Heart right ventricle (tissue), 16 donors: ENCODE measurements at regions of chr5 and their contacts with region 1.

Region 1: DNA sequence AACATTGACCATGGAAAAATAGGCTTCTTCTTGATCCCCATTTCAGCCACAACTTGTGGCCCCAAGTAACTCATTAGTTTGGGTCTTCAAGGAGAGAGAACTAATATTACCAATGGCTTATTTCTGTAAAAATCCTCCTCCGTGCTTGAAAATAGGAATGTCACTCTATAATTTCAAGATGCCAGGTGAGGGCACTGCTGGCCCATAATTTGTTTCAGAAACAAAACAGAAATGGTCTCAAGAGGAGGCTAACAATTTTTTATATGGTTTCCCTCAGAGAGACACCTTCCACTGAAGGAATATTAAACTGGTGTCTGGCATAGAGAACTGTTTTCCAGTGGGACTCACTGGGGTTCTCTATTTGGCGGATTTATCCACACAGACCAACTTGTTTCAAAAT is 437.0 kb upstream of the TRPC7 start:
- DNase-seq: no peak
- ATAC-seq: peak in 2 of 8 donors; percentile 35 to 58
- H3K4me3 ChIP-seq: no peak overlapping the region
- H3K27ac ChIP-seq: no peak overlapping the region
- H3K4me1 ChIP-seq: no peaks in the 10 kb centered on the region
- H3K27me3 ChIP-seq: no peaks in the 10 kb centered on the region
- CTCF ChIP-seq: peak in 8 of 9 donors; percentile 15 to 64 (median 48)

Region 2: DNA sequence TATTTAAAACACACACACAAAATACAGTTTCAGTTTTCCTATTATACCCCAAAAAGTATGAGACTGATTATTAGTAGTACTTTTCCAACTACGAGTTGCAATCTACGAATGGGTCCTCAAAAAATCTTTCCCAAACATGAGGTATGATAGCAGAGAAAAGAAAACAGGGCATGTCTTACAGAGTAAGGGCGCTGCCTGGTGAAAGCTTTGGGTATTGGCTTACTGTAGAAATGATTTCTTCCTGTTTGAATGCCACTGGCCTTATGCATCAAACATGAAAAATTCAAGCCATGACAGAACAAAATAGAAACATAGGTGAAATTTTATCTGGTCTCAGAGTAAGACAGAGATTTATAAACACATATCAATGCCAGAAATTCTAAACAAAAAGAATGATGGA is 248.8 kb after region 1 on chr5:
- intact Hi-C with region 1: loop called (anchors 2 to 10 kb)
- DNase-seq: no peak
- ATAC-seq: peak in 1 of 8 donors; percentile 55
- H3K4me3 ChIP-seq: no peak overlapping the region
- H3K27ac ChIP-seq: no peak overlapping the region
- H3K4me1 ChIP-seq: peaks cover 0 to 6% (median 0%) of the 10 kb centered on the region in 9 donors
- H3K27me3 ChIP-seq: no peaks in the 10 kb centered on the region
- CTCF ChIP-seq: peak in 7 of 9 donors; percentile 23 to 53 (median 40)

Region 3: DNA sequence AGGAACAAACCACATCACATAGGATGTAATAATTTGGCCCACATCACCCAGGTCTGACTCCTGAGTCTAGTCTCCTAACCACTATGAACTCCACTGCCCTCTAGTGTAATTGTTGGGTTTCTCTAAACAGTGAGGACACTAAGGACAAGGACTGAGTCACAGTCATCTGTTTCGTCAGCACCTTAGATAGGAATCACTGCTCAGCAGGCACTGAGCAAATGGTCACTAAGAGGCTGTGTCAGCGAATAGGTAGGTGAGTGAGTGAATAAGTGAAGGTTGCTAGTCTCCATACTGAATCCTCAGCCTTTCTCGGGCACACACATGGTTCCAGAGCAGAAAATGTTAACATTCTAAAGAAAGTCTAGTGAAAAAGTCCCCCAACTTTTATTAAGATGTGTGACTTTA is 418.1 kb after region 1 on chr5:
- intact Hi-C with region 1: loop called in 5 of 10 experiments (anchors 2 to 10 kb)
- DNase-seq: no peak
- ATAC-seq: peak in 6 of 8 donors; percentile 46 to 90 (median 66)
- H3K4me3 ChIP-seq: no peak overlapping the region
- H3K27ac ChIP-seq: no peak overlapping the region
- H3K4me1 ChIP-seq: peaks cover 0 to 16% (median 0%) of the 10 kb centered on the region in 9 donors
- H3K27me3 ChIP-seq: no peaks in the 10 kb centered on the region
- CTCF ChIP-seq: peak in 8 of 9 donors; percentile 12 to 64 (median 52)

Region 4: DNA sequence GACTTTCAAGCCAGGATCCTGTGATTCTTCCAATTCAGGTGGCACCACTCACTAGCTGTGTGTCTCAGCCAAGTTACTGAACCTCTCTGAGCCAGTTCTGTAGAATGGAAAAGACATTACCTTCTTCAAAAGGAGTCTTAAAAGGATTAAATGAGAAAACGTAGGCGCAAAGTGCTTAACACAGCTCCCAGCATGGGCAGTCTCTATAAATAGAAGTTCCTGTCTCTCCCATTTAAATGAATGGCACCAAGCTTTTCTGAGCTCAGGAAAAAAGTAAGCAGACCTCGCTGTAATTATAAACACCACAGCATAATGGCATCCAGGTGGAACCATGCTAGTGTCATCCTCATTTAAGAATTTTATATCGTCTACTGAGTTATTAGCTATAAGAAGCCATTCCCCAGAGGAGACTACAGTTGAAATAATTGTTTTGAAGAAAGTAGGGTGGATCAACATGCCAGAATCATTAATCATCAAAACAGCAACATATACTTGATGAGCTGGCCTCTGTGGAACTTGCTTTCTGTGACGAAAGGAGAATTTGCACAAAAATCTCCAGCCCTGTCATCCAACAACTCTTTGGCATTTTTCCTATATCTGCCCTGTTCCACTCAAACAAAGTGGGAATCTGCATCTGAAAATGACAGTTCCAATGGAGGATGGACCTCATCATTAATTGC is 507.8 kb after region 1 on chr5:
- intact Hi-C with region 1: loop called in 1 of 10 experiments (anchors 10 kb)
- DNase-seq: no peak
- ATAC-seq: peak in 2 of 8 donors; percentile 9 to 36
- H3K4me3 ChIP-seq: no peak overlapping the region
- H3K27ac ChIP-seq: peak overlapping the region in 1 of 10 donors; percentile 10
- H3K4me1 ChIP-seq: peaks cover 0 to 30% (median 10%) of the 10 kb centered on the region in 9 donors
- H3K27me3 ChIP-seq: no peaks in the 10 kb centered on the region
- CTCF ChIP-seq: no peak

Region 5: DNA sequence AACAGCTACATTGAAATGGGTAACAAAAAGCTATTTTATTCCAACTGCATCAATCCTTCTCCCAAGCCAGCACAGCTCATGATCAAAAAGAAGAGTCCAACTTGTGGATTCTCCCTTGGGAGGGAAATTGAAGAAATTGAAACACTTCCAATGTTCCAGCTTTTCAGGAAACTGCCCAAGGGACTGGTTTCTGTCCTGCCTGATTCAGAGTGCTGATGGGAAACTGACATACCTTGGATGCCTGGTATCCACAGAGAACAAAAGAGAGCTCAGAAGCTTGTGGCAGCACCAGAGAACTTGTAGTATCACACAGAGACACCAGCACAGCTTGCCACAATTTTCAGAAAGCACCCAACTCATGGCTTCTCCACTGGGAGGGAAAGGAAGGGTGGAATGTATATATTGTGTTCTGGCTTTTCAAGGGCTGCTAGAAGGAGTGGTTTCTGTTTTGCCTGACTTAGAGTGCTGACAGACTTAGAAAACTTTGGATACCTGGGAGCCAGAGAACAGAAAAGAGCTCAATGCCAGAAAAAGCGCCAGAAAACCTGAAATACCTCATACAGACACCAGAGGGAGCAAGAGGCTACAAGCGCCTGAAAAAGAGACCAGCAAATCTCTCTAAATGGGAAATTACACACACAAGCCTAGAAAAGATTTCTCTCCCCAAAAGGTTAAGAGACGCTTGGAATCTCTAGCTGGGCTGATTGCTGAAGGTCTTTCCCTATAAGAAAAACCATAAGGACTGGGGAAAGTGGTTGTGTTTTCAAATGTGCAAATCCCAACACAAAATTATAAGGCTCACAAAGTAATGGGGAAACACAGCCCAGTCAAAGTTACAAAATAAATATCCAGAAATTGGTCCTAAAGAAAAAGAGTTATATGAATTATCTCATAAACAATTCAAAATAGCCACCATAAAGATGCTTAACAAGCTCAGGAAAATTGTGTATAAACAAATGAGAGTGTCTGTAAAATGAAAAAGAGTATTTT is 518.0 kb after region 1 on chr5:
- intact Hi-C with region 1: loop called in 2 of 10 experiments (anchors 10 kb)
- DNase-seq: peak in 1 of 2 donors; percentile 26
- ATAC-seq: peak in 7 of 8 donors; percentile 28 to 59 (median 49)
- H3K4me3 ChIP-seq: no peak overlapping the region
- H3K27ac ChIP-seq: no peak overlapping the region
- H3K4me1 ChIP-seq: peaks cover 0 to 23% (median 11%) of the 10 kb centered on the region in 9 donors
- H3K27me3 ChIP-seq: peaks cover 0 to 8% (median 0%) of the 10 kb centered on the region in 7 donors
- CTCF ChIP-seq: peak; percentile 58 to 86 (median 83)

Region 6: DNA sequence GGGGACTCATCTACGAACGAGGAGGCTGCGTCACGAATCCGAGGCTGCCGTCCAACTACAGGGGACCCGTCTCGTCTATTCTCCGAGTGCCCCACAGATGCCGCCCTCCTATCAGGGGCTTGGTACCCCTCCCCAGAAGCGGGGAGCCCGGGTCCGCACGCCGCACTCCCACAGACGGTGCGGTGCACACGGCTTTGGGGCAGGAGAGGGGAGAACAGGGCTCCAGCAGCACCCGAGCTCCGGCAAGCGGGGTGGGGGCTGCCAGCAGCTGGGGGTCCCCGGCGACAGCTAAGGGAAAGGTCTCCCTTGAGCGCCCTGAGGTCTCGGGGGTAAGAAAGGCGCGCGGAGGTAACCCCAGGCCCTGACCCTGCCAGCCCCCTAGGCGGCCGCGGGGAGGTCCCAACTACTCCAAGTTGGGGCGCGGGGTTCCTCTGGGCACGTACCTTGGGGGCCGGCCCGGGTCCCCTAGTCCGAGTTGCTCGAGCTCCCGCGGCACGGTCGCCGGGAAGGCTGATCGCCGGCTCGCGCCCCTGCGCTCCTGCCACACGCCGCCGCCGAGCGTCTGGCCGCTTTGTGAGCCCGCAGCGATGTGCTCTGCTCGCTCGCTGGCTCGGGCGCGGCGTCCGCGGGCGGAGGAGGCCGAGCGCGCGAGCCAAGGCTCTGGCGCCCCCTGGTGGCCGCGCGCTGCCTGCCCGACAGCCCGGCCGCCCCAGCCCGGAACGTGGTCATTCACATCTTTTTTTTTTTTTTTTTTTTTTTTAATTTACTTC is 696.5 kb after region 1 on chr5 and contains the start of gene SPOCK1:
- intact Hi-C with region 1: loop called in 7 of 10 experiments (anchors 2 to 10 kb)
- DNase-seq: peak; percentile 47 to 75
- ATAC-seq: peak; percentile 87 to 95 (median 94)
- H3K4me3 ChIP-seq: peak within 1 kb of the TSS; percentile 26 to 79 (median 56)
- H3K27ac ChIP-seq: peak within 1 kb of the TSS in 4 of 10 donors; percentile 50 to 80 (median 56)
- H3K4me1 ChIP-seq: peaks cover 0 to 6% (median 5%) of the 10 kb centered on the region in 9 donors
- H3K27me3 ChIP-seq: peaks cover 0 to 39% (median 15%) of the 10 kb centered on the region in 7 donors
- CTCF ChIP-seq: peak; percentile 63 to 90 (median 78)
- total RNA-seq, gene SPOCK1: 21.6 to 70.3 (median 35.3) TPM

Region 7: GRCh38 chr5:137507150-137507549 is 704.8 kb after region 1 on chr5:
- intact Hi-C with region 1: loop called in 2 of 10 experiments (anchors 5 to 10 kb)
- DNase-seq: no peak
- ATAC-seq: no peak
- H3K4me3 ChIP-seq: no peak overlapping the region
- H3K27ac ChIP-seq: no peak overlapping the region
- H3K4me1 ChIP-seq: no peaks in the 10 kb centered on the region
- H3K27me3 ChIP-seq: peaks cover 0 to 19% (median 3%) of the 10 kb centered on the region in 7 donors
- CTCF ChIP-seq: no peak